ENCODE measurements at regions of chr5 and their contacts with region 1.

Region 1: DNA sequence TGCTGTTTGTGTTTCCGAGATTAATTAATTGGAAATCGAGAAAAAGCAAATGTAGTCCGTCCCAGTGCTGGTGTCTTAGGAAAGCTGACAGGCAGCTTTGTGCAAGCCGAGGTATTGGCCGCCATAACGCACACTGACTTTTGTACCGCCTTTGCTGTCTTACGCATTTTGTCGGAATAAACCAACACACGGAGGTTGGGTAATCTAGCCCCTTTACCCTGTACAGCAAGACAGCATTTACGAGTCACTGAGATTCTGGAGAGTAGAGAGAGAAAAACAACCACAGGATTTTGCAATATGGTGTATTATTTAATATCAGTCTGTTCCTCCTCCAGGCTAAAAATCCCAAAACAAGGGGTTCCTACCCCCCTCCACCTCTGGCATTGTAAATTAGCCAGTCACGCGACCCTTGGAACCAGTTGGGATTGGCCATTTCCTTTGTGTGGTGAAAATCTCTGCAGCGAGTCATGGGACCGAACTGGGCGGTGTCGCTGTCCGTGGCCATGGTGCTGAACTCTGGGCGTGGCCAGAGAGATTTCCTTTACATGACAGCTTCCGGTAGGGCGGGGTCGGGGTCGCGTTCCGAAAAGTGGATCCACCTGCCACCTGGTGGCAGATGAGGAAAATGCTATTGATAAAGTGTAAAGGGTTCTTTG is 10.3 kb upstream of the PCDHB1 start:
- H3K4me3 ChIP-seq: peak overlapping the region; percentile 32
- H3K27ac ChIP-seq: peak overlapping the region; percentile 25; the same call in 1 of the 2 replicates
- H3K4me1 ChIP-seq: peaks cover 14% of the 10 kb centered on the region
- CTCF ChIP-seq: no peak

Region 2: DNA sequence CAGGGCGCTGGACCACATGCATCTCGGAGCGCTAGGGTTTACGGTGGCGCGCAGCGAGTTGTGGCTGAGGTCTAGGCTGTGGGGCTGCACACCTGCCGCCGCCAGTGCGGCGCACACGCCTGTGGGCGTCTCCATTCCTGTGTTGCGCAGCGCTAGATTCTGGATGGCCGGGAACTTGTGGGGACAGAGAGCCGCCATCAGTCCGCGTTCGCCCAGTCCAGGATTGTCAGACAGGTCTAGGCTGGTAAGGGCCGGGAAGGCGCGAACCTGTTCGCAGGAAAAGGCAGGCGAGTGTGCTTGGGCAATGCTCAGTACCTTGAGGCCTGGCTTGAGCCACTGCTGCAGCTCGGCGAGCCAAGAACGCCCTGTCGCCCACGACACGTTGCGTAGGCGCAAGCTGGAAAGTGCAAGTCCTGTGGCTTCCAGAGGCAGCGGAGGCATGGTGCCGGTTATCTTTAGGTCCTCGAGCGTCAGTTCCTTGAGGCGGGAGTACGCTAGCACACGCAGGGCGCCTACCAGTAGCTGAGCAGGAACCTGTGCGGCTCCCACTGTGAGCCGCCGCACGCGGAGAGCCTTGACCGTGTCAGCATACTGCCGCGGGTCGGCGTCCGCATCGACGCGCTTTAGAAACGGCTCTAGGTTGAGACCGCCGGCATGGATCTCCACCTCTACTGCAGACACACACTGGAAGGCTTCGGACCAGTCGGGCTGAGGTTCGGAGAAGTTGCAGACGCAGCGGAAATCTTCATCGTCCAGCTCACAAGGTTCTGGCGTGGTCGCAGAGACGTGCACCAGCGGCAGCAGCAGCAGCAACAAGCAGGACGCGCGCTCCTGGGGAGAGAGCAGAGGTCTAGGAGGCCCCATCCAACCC is 408.5 kb before region 1 on chr5:
- CTCF ChIA-PET with region 1: no interaction called
- POLR2A ChIA-PET with region 1: no interaction called
- H3K4me3 ChIP-seq: no peak overlapping the region
- H3K27ac ChIP-seq: no peak overlapping the region
- H3K4me1 ChIP-seq: no peaks in the 10 kb centered on the region
- CTCF ChIP-seq: no peak

Region 3: DNA sequence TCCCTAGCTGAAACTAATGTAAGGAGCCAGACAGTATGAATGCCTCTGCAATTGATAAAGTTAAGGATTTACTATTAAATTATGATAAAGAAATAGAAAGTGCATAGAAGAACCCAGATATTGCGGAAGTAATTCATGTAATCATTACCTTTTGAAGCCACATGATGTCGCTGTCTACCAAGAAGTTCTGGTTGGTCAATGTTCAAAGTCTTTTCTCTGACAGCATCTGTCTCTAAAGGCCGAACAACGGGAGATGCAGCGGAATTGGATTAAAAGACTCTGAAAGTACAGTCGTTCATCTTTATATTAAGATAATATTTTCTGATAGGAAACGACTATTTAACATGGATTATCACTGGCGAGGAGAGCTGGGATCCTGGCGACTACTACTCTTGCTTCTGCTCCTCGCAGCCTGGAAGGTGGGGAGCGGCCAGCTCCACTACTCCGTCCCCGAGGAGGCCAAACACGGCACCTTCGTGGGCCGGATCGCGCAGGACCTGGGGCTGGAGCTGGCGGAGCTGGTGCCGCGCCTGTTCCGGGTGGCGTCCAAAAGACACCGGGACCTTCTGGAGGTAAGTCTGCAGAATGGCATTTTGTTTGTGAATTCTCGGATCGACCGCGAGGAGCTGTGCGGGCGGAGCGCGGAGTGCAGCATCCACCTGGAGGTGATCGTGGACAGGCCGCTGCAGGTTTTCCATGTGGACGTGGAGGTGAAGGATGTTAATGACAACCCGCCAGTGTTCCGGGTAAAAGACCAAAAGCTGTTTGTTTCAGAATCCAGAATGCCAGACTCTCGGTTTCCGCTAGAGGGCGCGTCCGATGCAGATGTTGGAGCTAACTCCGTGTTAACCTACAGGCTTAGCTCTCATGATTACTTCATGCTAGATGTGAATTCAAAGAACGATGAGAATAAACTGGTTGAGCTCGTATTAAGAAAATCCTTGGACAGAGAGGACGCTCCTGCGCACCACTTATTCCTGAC is 199.6 kb before region 1 on chr5 and contains the start of gene PCDHA8:
- CTCF ChIA-PET with region 1: interaction called, 24 read pairs
- POLR2A ChIA-PET with region 1: no interaction called
- H3K4me3 ChIP-seq: no peak within 1 kb of the TSS
- H3K27ac ChIP-seq: no peak within 1 kb of the TSS
- H3K4me1 ChIP-seq: no peaks in the 10 kb centered on the region
- CTCF ChIP-seq: no peak

Region 4: DNA sequence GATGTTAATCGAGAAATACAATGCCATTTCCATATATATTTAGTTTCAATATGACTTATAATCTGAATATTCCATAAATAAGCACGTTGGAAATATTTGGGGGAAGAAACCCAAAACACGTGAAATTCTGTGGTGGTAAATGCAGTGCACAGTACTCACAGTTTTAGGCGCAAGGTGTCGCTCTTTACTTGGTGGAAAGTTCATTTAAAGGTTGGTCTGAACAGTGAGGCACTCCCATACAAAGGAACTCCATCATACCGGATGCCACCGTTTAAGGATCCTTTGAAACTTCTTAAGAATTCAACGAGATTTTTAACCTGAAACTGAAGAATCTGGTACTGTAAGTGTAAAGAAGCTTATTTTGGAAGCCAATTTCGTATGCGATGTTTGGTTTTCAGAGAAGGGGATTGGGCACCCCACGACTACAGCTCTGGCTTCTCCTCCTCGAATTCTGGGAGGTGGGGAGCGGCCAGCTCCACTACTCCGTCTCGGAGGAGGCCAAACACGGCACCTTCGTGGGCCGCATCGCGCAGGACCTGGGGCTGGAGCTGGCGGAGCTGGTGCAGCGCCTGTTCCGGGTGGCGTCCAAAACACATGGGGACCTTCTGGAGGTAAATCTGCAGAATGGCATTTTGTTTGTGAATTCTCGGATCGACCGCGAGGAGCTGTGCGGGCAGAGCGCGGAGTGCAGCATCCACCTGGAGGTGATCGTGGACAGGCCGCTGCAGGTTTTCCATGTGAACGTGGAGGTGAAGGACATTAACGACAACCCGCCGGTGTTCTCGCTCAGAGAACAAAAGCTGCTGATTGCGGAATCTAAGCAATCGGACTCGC is 172.0 kb before region 1 on chr5 and contains the start of gene PCDHA11:
- CTCF ChIA-PET with region 1: interaction called, 40 read pairs
- POLR2A ChIA-PET with region 1: interaction called, 3 read pairs
- H3K4me3 ChIP-seq: peak within 1 kb of the TSS; percentile 17; the same call in 1 of the 2 replicates
- H3K27ac ChIP-seq: no peak within 1 kb of the TSS
- H3K4me1 ChIP-seq: no peaks in the 10 kb centered on the region
- CTCF ChIP-seq: no peak

Region 5: DNA sequence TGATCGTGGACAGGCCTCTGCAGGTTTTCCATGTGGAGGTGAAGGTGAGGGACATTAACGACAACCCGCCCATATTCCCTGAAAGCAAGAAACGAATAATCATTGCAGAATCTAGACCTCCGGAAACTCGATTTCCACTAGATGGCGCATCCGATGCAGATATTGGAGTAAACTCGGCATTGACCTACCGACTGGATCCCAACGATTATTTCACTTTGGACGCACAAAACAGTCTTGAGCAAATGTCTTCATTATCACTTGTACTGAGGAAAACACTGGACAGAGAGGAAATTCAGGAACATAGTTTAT is 158.4 kb before region 1 on chr5:
- CTCF ChIA-PET with region 1: interaction called, 81 read pairs
- POLR2A ChIA-PET with region 1: no interaction called
- H3K4me3 ChIP-seq: no peak overlapping the region
- H3K27ac ChIP-seq: no peak overlapping the region
- H3K4me1 ChIP-seq: no peaks in the 10 kb centered on the region
- CTCF ChIP-seq: no peak

Region 6: GRCh38 chr5:140966293-140967225 is 74.3 kb before region 1 on chr5 and contains the start of gene PCDHAC2:
- CTCF ChIA-PET with region 1: interaction called, 9 read pairs
- POLR2A ChIA-PET with region 1: interaction called, 11 read pairs
- H3K4me3 ChIP-seq: peak within 1 kb of the TSS; percentile 55
- H3K27ac ChIP-seq: peak within 1 kb of the TSS; percentile 47; the same call in 1 of the 2 replicates
- H3K4me1 ChIP-seq: peaks cover 5% of the 10 kb centered on the region; the same call in 1 of the 2 replicates
- CTCF ChIP-seq: no peak

Measured in HEK293 (cell line).